PC-3 (cell line): ENCODE measurements at regions of chr12 and their contacts with region 1.

Region 1: DNA sequence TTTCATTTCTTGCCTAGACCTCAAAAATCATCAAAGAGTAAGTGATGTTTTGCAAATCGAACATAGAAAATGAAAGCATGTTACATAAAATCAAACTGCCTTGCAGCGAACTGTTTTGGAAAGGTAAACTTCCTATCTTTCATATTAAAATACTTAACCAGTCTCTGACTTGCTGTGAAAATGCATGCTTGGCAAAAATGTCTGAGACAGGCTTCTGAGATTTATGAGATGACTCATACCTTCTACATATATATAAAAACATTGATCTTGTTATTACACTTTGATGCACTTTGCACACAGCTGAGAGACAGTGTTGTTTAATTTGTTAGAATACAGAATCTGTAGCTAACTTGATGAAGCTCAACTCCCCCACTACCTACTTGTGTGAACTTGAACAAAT is 179.1 kb downstream of the KITLG start:
- DNase-seq: peak; percentile 88
- ATAC-seq: peak; percentile 93
- H3K4me3 ChIP-seq: peak overlapping the region; percentile 64
- H3K27ac ChIP-seq: peak overlapping the region; percentile 61
- H3K4me1 ChIP-seq: peaks cover 21% of the 10 kb centered on the region
- H3K27me3 ChIP-seq: no peaks in the 10 kb centered on the region
- CTCF ChIP-seq: no peak

Region 2: GRCh38 chr12:88291498-88292131 is 109.5 kb before region 1 on chr12:
- CTCF ChIA-PET with region 1: interaction called, 3 read pairs
- POLR2A ChIA-PET with region 1: interaction called, 9 read pairs
- intact Hi-C with region 1: loop called (anchors 5 kb)
- DNase-seq: peak; percentile 82
- ATAC-seq: peak; percentile 93
- H3K4me3 ChIP-seq: peak overlapping the region; percentile 36
- H3K27ac ChIP-seq: peak overlapping the region; percentile 76
- H3K4me1 ChIP-seq: peaks cover 17% of the 10 kb centered on the region
- H3K27me3 ChIP-seq: no peaks in the 10 kb centered on the region
- CTCF ChIP-seq: no peak

Region 3: DNA sequence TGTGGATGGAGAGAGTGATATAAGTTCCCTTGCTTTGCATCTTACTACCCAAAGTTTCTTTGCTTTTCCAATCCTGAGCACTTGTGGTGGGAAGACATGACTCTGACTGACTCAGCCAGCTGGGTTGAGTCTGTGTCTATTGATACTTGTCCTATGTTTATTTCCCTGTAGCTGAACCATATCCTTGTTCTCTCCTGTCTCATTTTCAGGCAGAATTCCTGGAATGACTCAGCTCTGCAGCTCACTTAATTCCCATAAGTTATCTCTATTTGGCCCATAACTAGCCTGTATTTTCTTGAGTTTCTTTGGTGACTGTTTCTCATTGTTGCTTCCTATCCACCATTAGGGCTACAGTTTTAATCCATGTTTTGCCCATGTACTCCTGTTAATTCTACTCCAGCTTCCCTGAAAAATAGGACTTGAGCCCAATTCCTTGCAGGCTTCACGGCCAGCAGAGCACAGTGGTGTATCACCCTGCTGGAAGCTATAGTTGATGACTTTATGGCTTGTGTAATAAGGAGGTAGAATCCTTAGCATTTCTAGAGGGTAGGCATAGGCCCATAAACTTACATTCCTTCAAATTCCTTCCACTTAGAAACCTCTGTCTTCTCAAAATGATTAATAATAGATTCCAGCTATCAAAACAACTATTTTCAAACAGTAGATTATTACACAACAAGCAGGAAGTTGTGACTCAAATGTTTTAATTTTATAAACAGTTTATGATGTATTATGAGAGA is 75.9 kb before region 1 on chr12:
- CTCF ChIA-PET with region 1: no interaction called
- POLR2A ChIA-PET with region 1: no interaction called
- intact Hi-C with region 1: loop called (anchors 2 kb)
- DNase-seq: peak; percentile 92
- ATAC-seq: peak; percentile 100
- H3K4me3 ChIP-seq: no peak overlapping the region
- H3K27ac ChIP-seq: peak overlapping the region; percentile 96
- H3K4me1 ChIP-seq: peaks cover 22% of the 10 kb centered on the region
- H3K27me3 ChIP-seq: no peaks in the 10 kb centered on the region
- CTCF ChIP-seq: no peak

Region 4: GRCh38 chr12:88362439-88362838 is 38.7 kb before region 1 on chr12:
- CTCF ChIA-PET with region 1: no interaction called
- POLR2A ChIA-PET with region 1: no interaction called
- intact Hi-C with region 1: loop called (anchors 5 kb)
- DNase-seq: peak; percentile 67
- ATAC-seq: peak; percentile 87
- H3K4me3 ChIP-seq: no peak overlapping the region
- H3K27ac ChIP-seq: no peak overlapping the region
- H3K4me1 ChIP-seq: peaks cover 24% of the 10 kb centered on the region
- H3K27me3 ChIP-seq: no peaks in the 10 kb centered on the region
- CTCF ChIP-seq: no peak

Region 5: GRCh38 chr12:88493636-88494035 is 92.5 kb after region 1 on chr12:
- CTCF ChIA-PET with region 1: no interaction called
- POLR2A ChIA-PET with region 1: no interaction called
- intact Hi-C with region 1: loop called (anchors 5 kb)
- DNase-seq: peak; percentile 95
- ATAC-seq: peak; percentile 73
- H3K4me3 ChIP-seq: 0 out of 2 replicates have a peak overlapping the region, but pooled peaks have one; percentile 21
- H3K27ac ChIP-seq: peak overlapping the region; percentile 61
- H3K4me1 ChIP-seq: peaks cover 40% of the 10 kb centered on the region
- H3K27me3 ChIP-seq: no peaks in the 10 kb centered on the region
- CTCF ChIP-seq: no peak

Region 6: DNA sequence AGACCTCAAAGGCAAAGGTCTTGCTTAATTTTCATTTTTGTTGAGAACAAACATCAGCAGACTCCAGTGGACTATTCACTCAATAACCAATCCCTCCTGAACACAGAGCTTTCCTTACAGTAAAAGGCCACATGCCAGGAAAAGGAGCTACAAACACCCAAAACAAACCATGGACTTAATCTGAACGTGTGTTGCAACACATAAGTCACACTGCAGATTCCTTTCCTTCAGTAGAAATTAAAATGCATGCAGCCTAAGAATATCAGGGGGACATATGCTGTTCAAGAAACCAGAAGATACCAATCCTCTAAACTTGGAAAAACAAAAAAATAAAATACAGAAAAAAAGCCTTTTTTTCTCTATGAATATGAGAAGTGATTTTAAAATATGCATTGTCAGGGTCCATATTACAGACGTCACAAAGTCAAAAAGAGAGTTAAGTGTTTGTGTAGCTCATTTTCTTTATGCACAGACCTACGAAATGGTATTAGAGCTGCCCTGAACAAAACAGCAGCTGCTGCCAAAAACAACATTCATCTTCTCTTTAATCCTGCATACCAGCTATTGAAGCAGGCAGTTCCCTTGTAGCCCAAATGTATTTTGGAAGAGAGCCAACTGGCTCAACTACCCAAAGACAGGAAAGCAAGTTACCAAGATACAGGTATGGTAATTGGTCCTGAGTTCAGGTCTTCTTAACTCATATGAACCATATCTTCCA is 152.9 kb after region 1 on chr12:
- CTCF ChIA-PET with region 1: no interaction called
- POLR2A ChIA-PET with region 1: no interaction called
- intact Hi-C with region 1: loop called (anchors 2 kb)
- DNase-seq: peak; percentile 92
- ATAC-seq: peak; percentile 44
- H3K4me3 ChIP-seq: no peak overlapping the region
- H3K27ac ChIP-seq: peak overlapping the region; percentile 83
- H3K4me1 ChIP-seq: peaks cover 38% of the 10 kb centered on the region
- H3K27me3 ChIP-seq: no peaks in the 10 kb centered on the region
- CTCF ChIP-seq: no peak

Region 7: DNA sequence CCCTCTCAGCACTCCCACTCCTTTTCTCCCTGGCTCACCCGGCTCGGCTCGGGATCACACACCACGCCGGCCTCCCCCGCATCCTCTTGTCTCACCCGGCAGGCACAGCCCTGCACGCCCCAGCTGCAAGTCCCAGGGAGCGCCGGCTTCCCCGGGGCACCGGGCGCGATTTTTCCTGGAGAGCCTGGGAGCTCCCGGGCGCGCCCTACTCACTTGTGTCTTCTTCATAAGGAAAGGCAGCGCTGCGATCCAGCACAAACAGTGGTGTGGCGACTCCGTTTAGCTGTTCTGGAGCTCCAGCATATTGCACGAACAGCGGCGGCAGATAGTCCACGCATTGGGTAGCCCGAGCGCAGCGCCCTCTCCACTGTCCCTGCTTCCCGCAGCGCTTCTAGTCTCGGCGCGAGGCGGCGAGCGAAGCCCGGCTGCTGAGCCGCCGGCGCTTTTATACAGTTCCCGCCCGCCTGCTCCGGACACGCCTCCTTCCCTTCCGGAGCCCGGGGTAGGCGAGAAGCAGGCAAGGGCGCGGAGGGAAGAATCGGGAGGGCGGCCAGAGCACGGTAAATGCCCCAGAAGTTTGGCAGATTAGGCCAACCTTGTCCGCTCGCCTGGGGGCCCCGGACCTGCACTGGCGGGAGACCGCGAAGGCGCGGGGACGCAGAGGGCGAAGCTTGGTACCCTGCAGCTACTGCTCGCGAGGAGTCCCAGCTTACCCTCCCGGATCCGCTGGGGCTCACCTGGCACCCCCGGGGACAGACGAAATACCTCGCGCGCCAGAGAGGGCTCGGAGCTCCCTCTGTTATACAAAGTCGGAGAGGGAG is 179.1 kb after region 1 on chr12 and contains the start of gene KITLG:
- CTCF ChIA-PET with region 1: no interaction called
- POLR2A ChIA-PET with region 1: no interaction called
- intact Hi-C with region 1: loop called (anchors 1 kb)
- DNase-seq: peak; percentile 91
- ATAC-seq: peak; percentile 77
- H3K4me3 ChIP-seq: peak within 1 kb of the TSS; percentile 94
- H3K27ac ChIP-seq: peak within 1 kb of the TSS; percentile 24
- H3K4me1 ChIP-seq: peaks cover 37% of the 10 kb centered on the region
- H3K27me3 ChIP-seq: no peaks in the 10 kb centered on the region
- CTCF ChIP-seq: peak; percentile 38; the same call in 1 of the 2 replicates
- total RNA-seq, gene KITLG: 8.4 and 14.9 TPM in 2 replicates